Colonic mucosa (tissue), 4 donors: ENCODE measurements at regions of chr1 and their contacts with region 1.

Region 1: GRCh38 chr1:91997607-91998195 is 32.1 kb upstream of the EPHX4 start:
- DNase-seq: peak; percentile 34
- H3K4me3 ChIP-seq: no peak overlapping the region
- H3K27ac ChIP-seq: no peak overlapping the region
- H3K4me1 ChIP-seq: no peaks in the 10 kb centered on the region
- H3K27me3 ChIP-seq: no peaks in the 10 kb centered on the region
- CTCF ChIP-seq: peak; percentile 45

Region 2: DNA sequence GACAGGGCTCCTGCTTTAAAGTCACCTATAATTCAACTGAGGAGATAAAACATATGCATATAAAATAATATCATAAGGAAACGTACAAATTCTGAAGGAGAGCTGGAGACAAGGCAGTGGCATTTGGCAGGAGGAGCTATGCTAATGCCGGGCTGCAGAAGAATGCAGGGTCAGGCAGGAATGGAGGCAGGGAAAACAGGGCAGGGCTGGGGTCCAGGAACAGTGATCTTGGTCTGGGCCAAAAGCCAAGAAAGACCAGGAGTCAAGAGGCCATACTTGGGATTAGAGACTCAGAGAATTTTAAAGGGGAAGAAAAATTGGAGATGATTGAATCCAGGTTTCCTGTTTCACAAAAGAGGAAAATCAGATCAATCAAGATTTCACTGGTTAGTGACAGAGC is 68.5 kb before region 1 on chr1:
- intact Hi-C with region 1: no loop called
- DNase-seq: no peak
- H3K4me3 ChIP-seq: no peak overlapping the region
- H3K27ac ChIP-seq: no peak overlapping the region
- H3K4me1 ChIP-seq: no peaks in the 10 kb centered on the region
- H3K27me3 ChIP-seq: no peaks in the 10 kb centered on the region
- CTCF ChIP-seq: no peak

Region 3: DNA sequence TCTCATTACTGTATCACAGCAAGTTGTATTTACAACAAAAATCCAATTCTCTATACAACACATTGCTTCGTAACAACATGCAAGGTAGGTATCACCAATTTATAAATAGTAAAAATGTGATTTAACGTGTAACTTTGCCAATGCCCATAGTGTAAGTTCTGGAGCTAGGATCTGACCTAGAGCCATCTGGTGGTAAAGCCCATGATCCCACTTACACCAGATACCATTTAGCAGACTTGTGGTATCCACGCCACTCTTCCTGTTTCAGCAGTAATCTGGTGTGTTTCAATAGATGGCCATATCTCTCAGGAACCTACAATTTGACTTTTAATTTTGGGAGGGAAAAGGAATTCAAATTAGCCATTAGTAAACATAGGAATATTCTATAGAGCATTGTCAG is 67.3 kb after region 1 on chr1:
- intact Hi-C with region 1: no loop called
- DNase-seq: no peak
- H3K4me3 ChIP-seq: no peak overlapping the region
- H3K27ac ChIP-seq: no peak overlapping the region
- H3K4me1 ChIP-seq: no peaks in the 10 kb centered on the region
- H3K27me3 ChIP-seq: no peaks in the 10 kb centered on the region
- CTCF ChIP-seq: no peak

Region 4: GRCh38 chr1:92291372-92291999 is 293.8 kb after region 1 on chr1:
- intact Hi-C with region 1: loop called (anchors 5 kb)
- DNase-seq: no peak
- H3K4me3 ChIP-seq: no peak overlapping the region
- H3K27ac ChIP-seq: no peak overlapping the region
- H3K4me1 ChIP-seq: no peaks in the 10 kb centered on the region
- H3K27me3 ChIP-seq: no peaks in the 10 kb centered on the region
- CTCF ChIP-seq: peak; percentile 54